ENCODE measurements at regions of chr6 and their contacts with region 1.

Region 1: GRCh38 chr6:3913077-3913957 is 64.1 kb downstream of the FAM50B start:
- DNase-seq: peak; percentile 99
- ATAC-seq: peak; percentile 84
- H3K4me3 ChIP-seq: peak overlapping the region in 2 of 3 experiments; percentile 4 to 34; a peak in 2 of 6 replicates
- H3K27ac ChIP-seq: peak overlapping the region; percentile 94
- H3K4me1 ChIP-seq: peaks cover 76% of the 10 kb centered on the region
- H3K27me3 ChIP-seq: no peaks in the 10 kb centered on the region
- CTCF ChIP-seq: no peak
- EP300 ChIP-seq: peak; percentile 57 to 97
- POLR2A ChIP-seq: 0 out of 4 replicates have a peak, but pooled peaks of 1 of the 2 experiments have one; percentile 18
- RAD21 ChIP-seq: 0 out of 2 replicates have a peak, but pooled peaks have one; percentile 12

Region 2: GRCh38 chr6:3612341-3613041 is 300.8 kb before region 1 on chr6:
- CTCF ChIA-PET with region 1: no interaction called
- POLR2A ChIA-PET with region 1: no interaction called
- in situ Hi-C with region 1: no loop called
- intact Hi-C with region 1: no loop called
- DNase-seq: peak; percentile 27
- ATAC-seq: no peak
- H3K4me3 ChIP-seq: no peak overlapping the region
- H3K27ac ChIP-seq: no peak overlapping the region
- H3K4me1 ChIP-seq: no peaks in the 10 kb centered on the region
- H3K27me3 ChIP-seq: peaks cover 5 to 73% of the 10 kb centered on the region in 2 experiments
- CTCF ChIP-seq: no peak
- EP300 ChIP-seq: no peak
- POLR2A ChIP-seq: no peak
- RAD21 ChIP-seq: no peak

Region 3: DNA sequence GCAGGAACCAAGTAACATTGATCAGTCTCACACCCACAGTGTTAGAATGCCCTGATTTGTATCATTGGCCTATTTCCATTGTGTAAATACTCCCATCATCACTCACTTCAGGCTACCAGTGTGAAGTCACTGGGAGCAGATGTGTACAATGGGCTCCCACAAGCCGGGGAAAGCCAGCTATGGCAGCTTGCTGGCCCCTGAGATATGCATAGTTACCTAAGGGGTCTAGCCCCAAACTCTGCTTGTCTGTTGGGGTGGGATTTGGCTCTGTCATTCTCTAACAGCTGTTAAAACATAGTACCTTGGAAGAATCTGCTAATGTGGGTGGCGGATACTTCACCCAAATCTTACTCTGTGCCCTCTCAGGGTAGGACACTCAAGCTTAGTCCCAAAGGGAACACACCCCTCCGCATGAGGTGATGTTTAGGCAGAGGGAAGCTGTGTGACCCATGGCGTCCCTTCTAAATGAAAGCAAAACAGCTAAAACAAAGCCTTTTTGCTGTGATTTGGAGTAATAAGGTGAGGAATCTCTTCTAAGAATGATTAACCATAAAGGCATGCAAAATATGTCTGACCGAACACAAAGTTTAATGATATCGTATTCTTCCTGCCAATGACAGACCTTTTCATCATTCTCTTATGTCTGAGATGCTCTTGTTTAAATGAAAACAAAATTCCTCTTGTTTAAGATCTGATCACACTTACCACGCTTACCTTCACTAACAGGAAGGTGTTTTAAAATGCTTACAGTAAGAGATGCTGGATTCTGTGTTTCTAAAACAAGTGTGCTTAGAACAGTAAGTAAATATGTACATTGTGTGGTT is 115.9 kb before region 1 on chr6:
- CTCF ChIA-PET with region 1: no interaction called
- POLR2A ChIA-PET with region 1: interaction called, 20 read pairs
- in situ Hi-C with region 1: no loop called
- intact Hi-C with region 1: no loop called
- DNase-seq: peak; percentile 89
- ATAC-seq: peak; percentile 83
- H3K4me3 ChIP-seq: peak overlapping the region; percentile 4 to 25 (median 17); a peak in 5 of 6 replicates
- H3K27ac ChIP-seq: peak overlapping the region; percentile 83
- H3K4me1 ChIP-seq: peaks cover 64% of the 10 kb centered on the region
- H3K27me3 ChIP-seq: no peaks in the 10 kb centered on the region
- CTCF ChIP-seq: no peak
- EP300 ChIP-seq: peak; percentile 57; a peak in 2 of 4 replicates
- POLR2A ChIP-seq: peak in 1 of 2 experiments; percentile 63; a peak in 1 of 4 replicates
- RAD21 ChIP-seq: peak; percentile 28

Region 4: DNA sequence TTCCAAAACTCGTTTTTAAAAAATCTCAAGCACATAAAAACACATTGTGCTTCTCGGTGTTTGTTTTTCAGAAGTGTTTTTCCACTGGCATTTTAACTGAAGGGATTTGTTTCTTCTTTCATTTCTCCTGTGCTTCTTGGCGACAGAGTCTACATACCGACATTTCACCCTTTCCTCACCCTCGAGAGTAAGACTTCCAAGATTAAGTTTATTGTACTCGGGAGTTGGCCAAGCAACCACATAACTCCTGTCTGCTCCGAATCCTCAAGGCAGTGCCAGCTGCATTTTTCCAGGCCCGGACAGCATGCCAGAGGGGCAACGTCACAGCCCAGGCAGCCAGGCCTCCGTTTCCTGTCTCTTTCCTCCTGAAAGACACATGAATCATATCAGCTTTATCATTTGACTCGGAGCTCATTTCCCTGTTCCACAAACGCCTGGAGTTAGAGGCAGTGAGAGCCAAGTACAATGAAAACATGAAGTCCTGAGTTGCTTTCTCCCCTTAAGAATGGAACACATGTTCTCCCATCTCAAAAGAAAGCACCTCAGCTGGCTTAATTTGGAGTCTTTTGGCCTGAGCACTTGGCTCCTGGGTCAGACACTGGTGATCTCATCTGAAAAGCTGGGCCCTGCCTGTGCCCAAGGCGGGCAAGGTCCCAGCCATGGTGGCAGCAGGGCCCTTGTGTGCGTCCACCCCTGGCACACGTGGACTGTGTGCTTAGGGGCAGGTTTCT is 87.3 kb before region 1 on chr6:
- CTCF ChIA-PET with region 1: no interaction called
- POLR2A ChIA-PET with region 1: interaction called, 11 read pairs
- in situ Hi-C with region 1: no loop called
- intact Hi-C with region 1: no loop called
- DNase-seq: peak; percentile 73
- ATAC-seq: peak; percentile 78
- H3K4me3 ChIP-seq: peak overlapping the region; percentile 24 to 43 (median 31); a peak in 5 of 6 replicates
- H3K27ac ChIP-seq: peak overlapping the region; percentile 48
- H3K4me1 ChIP-seq: peaks cover 49% of the 10 kb centered on the region
- H3K27me3 ChIP-seq: no peaks in the 10 kb centered on the region
- CTCF ChIP-seq: no peak
- EP300 ChIP-seq: no peak
- POLR2A ChIP-seq: no peak
- RAD21 ChIP-seq: no peak

Region 5: DNA sequence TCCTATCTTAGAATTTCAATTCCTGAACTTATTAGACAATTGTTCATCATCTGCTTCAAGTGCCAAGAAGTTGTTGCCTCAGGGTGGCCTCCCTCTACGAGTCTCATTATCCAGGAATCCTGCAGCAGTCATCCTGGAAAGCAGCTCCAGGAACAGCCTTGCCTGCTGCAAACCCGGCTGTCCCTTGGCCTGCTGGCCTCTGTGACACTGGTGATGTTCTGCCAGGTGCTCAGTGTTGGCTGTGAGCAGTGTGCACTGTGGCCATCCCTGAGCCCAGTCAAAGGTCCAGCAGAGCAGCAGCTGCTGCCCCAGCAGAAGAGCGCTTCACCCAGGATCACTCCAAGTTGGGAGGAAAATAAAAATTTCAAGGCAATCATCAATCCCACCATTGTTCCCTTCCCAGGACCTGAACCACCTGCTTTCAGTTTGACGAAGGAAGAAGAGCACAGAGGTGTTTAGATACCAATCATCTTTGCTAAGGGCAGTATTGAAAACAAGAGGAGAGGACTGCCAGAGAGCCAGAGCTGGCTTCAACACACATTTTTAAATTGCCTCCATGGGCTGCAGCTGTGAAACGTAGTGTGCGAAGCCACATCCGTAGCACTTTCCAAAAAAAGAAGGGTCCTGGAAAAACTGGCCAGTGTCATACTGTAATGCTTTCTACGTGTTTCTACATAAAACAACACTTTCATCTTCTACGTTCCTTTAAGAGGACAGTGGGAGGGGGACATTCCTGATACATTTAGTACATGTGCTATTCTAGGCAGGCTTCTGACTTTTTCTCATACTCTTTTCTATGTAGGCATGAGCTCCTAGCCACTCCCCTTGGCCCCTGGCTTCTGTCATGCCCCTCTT is 71.4 kb before region 1 on chr6:
- CTCF ChIA-PET with region 1: no interaction called
- POLR2A ChIA-PET with region 1: interaction called, 49 read pairs
- in situ Hi-C with region 1: no loop called
- intact Hi-C with region 1: loop called (anchors 1 kb)
- DNase-seq: peak; percentile 30
- ATAC-seq: peak; percentile 55
- H3K4me3 ChIP-seq: no peak overlapping the region; a peak in 1 of 6 replicates
- H3K27ac ChIP-seq: peak overlapping the region; percentile 97
- H3K4me1 ChIP-seq: peaks cover 61% of the 10 kb centered on the region
- H3K27me3 ChIP-seq: no peaks in the 10 kb centered on the region
- CTCF ChIP-seq: no peak
- EP300 ChIP-seq: no peak
- POLR2A ChIP-seq: no peak
- RAD21 ChIP-seq: no peak

Region 6: GRCh38 chr6:3887150-3887700 is 26.1 kb before region 1 on chr6:
- CTCF ChIA-PET with region 1: no interaction called
- POLR2A ChIA-PET with region 1: interaction called, 27 read pairs
- in situ Hi-C with region 1: no loop called
- intact Hi-C with region 1: loop called (anchors 1 kb)
- DNase-seq: peak; percentile 57
- ATAC-seq: peak; percentile 79
- H3K4me3 ChIP-seq: no peak overlapping the region
- H3K27ac ChIP-seq: peak overlapping the region; percentile 7
- H3K4me1 ChIP-seq: peaks cover 78% of the 10 kb centered on the region
- H3K27me3 ChIP-seq: no peaks in the 10 kb centered on the region
- CTCF ChIP-seq: peak; percentile 79
- EP300 ChIP-seq: no peak
- POLR2A ChIP-seq: no peak
- RAD21 ChIP-seq: no peak; the same call in 1 of the 2 replicates

Region 7: GRCh38 chr6:3929281-3929798 is 16.0 kb after region 1 on chr6:
- CTCF ChIA-PET with region 1: interaction called, 4 read pairs
- POLR2A ChIA-PET with region 1: interaction called, 19 read pairs
- in situ Hi-C with region 1: no loop called
- intact Hi-C with region 1: loop called (anchors 1 kb)
- DNase-seq: no peak
- ATAC-seq: no peak
- H3K4me3 ChIP-seq: no peak overlapping the region
- H3K27ac ChIP-seq: no peak overlapping the region
- H3K4me1 ChIP-seq: peaks cover 16% of the 10 kb centered on the region
- H3K27me3 ChIP-seq: no peaks in the 10 kb centered on the region
- CTCF ChIP-seq: no peak
- EP300 ChIP-seq: no peak
- POLR2A ChIP-seq: no peak
- RAD21 ChIP-seq: no peak

Measured in HepG2 (cell line).